Head of caudate nucleus (tissue), 42 donors: ENCODE measurements at regions of chr5 and their contacts with region 1.

Region 1: GRCh38 chr5:691817-692528 is 1.2 kb downstream of the TPPP start:
- DNase-seq: no peak

Region 2: DNA sequence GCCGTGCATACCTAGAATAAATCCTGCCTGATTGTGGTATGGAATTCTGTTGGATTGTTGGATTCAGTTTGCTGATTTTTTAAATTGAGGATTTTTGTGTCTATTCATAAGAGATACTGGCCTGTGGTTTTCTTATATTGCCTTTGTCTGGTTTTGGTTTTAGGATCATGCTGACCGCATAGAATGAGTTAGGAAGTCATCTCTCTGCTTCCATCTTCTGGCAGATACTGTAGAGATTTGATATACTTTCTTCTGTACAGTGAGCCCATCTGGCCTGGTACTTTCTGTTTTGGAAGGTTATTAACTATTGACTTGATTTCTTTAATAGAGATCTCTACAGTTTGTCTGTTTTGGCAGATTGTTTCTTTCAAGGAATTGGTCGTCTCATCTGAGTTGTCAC is 65.1 kb before region 1 on chr5:
- intact Hi-C with region 1: no loop called
- DNase-seq: no peak

Region 3: DNA sequence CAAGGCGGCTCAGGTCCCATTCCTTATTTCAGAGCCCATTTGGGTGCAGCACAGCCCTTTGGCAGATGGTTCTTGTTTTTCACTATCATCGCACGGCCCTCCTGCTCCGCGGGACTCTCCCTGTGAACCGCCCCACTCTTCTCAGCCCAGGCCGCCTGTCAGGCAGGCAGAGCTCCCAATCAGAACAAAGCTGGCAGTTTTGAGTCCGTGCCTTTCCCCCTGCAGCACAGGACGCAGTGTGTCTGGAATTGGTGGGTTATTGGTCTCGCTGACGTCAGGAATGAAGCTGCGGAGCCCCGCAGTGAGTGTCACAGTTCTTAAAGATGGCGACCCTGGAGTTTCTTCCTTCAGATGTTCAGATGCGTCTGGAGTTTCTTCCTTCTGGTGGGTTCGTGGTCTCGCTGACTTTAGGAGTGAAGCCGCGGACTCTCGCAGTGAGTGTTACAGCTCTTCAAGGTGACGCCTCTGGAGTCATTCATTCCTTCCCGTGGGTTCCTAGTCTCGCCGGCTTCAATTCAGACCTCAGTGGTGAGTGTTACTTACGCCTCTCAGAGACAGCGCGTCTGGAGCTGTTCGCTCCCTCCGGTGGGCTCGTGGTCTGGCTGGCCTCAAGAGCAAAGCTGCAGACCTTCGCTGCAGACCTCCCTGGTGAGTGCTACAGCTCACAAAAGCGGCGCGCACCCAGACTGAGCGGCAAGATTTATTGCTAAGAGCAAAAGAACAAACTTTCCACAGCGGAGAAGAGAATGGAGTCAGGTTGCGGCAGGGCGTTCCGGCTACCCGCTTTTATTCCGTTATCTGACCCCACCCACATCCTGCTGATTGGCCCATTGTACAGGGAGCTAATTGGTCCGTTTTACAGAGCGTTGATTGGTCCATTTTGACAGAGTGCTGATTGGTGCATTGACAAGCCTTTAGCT is 85.1 kb after region 1 on chr5:
- intact Hi-C with region 1: loop called (anchors 10 kb)
- DNase-seq: peak in 7 of 42 donors; percentile 6 to 31 (median 10)